K562 (cell line): ENCODE measurements at regions of chr7 and their contacts with region 1.

Region 1: DNA sequence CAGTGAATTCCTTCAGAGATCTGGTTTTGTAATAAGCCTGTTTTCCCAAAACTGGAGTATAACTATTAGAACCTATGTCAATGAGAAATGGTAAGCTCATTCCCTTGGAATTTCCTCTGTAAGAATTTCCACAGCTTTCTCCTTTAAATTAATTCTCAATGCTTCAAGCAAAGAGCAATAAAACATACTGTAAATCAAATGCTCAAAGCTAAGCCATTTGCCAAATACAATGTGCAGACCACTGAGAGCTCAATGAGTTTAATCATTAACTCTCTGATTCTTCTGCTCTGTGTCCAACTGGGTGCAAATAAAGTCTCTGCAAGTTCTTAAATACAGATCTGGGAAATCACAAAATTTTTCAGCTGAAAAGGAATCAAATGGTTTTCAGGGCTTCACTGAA is 227.6 kb upstream of the IMMP2L start:
- DNase-seq: no peak
- ATAC-seq: no peak
- H3K4me3 ChIP-seq: no peak overlapping the region
- H3K27ac ChIP-seq: no peak overlapping the region
- H3K4me1 ChIP-seq: no peaks in the 10 kb centered on the region
- H3K27me3 ChIP-seq: no peaks in the 10 kb centered on the region
- CTCF ChIP-seq: no peak
- EP300 ChIP-seq: no peak
- POLR2A ChIP-seq: no peak
- RAD21 ChIP-seq: no peak

Region 2: GRCh38 chr7:111775206-111775605 is 14.7 kb before region 1 on chr7:
- CTCF ChIA-PET with region 1: no interaction called
- POLR2A ChIA-PET with region 1: no interaction called
- in situ Hi-C with region 1: no loop called
- intact Hi-C with region 1: no loop called
- DNase-seq: no peak
- ATAC-seq: no peak
- H3K4me3 ChIP-seq: no peak overlapping the region
- H3K27ac ChIP-seq: no peak overlapping the region
- H3K4me1 ChIP-seq: no peaks in the 10 kb centered on the region
- H3K27me3 ChIP-seq: 0 out of 5 replicates have a peak, but pooled peaks cover 0 to 4% of the 10 kb centered on the region in 2 experiments
- CTCF ChIP-seq: no peak
- EP300 ChIP-seq: no peak
- POLR2A ChIP-seq: no peak
- RAD21 ChIP-seq: no peak

Region 3: GRCh38 chr7:111820621-111821020 is 30.8 kb after region 1 on chr7:
- CTCF ChIA-PET with region 1: no interaction called
- POLR2A ChIA-PET with region 1: no interaction called
- in situ Hi-C with region 1: no loop called
- intact Hi-C with region 1: loop called (anchors 1 kb)
- DNase-seq: no peak
- ATAC-seq: no peak
- H3K4me3 ChIP-seq: no peak overlapping the region
- H3K27ac ChIP-seq: no peak overlapping the region
- H3K4me1 ChIP-seq: no peaks in the 10 kb centered on the region
- H3K27me3 ChIP-seq: no peaks in the 10 kb centered on the region; a peak in 1 of 5 replicates
- CTCF ChIP-seq: no peak
- EP300 ChIP-seq: no peak
- POLR2A ChIP-seq: no peak
- RAD21 ChIP-seq: no peak